Activated naive CD4-positive, alpha-beta T cell treated with anti-CD3 and anti-CD28 coated beads for 36 hours (primary cell): ENCODE measurements at regions of chr15 and their contacts with region 1.

Region 1: GRCh38 chr15:67762610-67763368 is 62.5 kb upstream of the SKOR1 start:
- DNase-seq: peak; percentile 83
- H3K4me3 Mint-ChIP-seq: no peak overlapping the region
- H3K27ac Mint-ChIP-seq: peak overlapping the region; percentile 28
- H3K4me1 Mint-ChIP-seq: peaks cover 61% of the 10 kb centered on the region
- H3K27me3 Mint-ChIP-seq: no peaks in the 10 kb centered on the region

Region 2: GRCh38 chr15:67109141-67110034 is 653.4 kb before region 1 on chr15:
- CTCF ChIA-PET with region 1: no interaction called
- intact Hi-C with region 1: loop called (anchors 10 kb)
- DNase-seq: no peak
- H3K4me3 Mint-ChIP-seq: no peak overlapping the region
- H3K27ac Mint-ChIP-seq: no peak overlapping the region
- H3K4me1 Mint-ChIP-seq: peaks cover 51% of the 10 kb centered on the region
- H3K27me3 Mint-ChIP-seq: no peaks in the 10 kb centered on the region

Region 3: GRCh38 chr15:67542420-67543347 is 220.1 kb before region 1 on chr15 and contains the start of gene MAP2K5:
- CTCF ChIA-PET with region 1: no interaction called
- intact Hi-C with region 1: loop called (anchors 5 kb)
- DNase-seq: peak; percentile 84
- H3K4me3 Mint-ChIP-seq: peak within 1 kb of the TSS; percentile 91
- H3K27ac Mint-ChIP-seq: peak within 1 kb of the TSS; percentile 95
- H3K4me1 Mint-ChIP-seq: peaks cover 47% of the 10 kb centered on the region
- H3K27me3 Mint-ChIP-seq: no peaks in the 10 kb centered on the region
- total RNA-seq, gene MAP2K5: 15.4 to 20.6 TPM

Region 4: DNA sequence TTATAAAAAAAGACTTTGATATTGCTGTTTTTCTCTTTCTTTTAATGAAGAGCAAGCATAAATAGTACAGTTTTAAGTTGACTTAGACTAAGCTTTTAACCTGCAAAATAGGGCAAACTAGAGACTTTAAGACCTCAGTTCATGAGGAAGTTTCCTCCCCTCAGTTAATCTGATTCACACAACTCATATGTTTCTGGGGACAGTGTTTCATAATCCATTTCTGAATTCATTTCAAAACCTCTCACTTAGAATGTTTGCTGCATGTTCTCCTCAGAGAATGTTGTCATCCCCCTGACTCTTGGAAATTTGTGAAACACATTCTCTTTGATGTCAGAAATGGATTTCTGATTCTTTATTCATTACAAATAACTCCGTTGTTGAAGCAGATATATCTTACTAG is 16.8 kb before region 1 on chr15:
- CTCF ChIA-PET with region 1: no interaction called
- intact Hi-C with region 1: loop called (anchors 1 kb)
- DNase-seq: no peak
- H3K4me3 Mint-ChIP-seq: no peak overlapping the region
- H3K27ac Mint-ChIP-seq: peak overlapping the region; percentile 26
- H3K4me1 Mint-ChIP-seq: peaks cover 61% of the 10 kb centered on the region
- H3K27me3 Mint-ChIP-seq: no peaks in the 10 kb centered on the region